Caco-2 (cell line): ENCODE measurements at regions of chr2 and their contacts with region 1.

Region 1: GRCh38 chr2:5915881-5916310 is 223.7 kb downstream of the SOX11 start:
- DNase-seq: peak; percentile 39 to 43
- H3K4me3 ChIP-seq: no peak overlapping the region
- H3K4me3 Mint-ChIP-seq: no peak overlapping the region
- H3K27ac Mint-ChIP-seq: no peak overlapping the region
- H3K4me1 ChIP-seq: no peaks in the 10 kb centered on the region
- H3K4me1 Mint-ChIP-seq: peaks cover 4% of the 10 kb centered on the region
- H3K27me3 ChIP-seq: no peaks in the 10 kb centered on the region
- H3K27me3 Mint-ChIP-seq: no peaks in the 10 kb centered on the region
- CTCF ChIP-seq: no peak

Region 2: DNA sequence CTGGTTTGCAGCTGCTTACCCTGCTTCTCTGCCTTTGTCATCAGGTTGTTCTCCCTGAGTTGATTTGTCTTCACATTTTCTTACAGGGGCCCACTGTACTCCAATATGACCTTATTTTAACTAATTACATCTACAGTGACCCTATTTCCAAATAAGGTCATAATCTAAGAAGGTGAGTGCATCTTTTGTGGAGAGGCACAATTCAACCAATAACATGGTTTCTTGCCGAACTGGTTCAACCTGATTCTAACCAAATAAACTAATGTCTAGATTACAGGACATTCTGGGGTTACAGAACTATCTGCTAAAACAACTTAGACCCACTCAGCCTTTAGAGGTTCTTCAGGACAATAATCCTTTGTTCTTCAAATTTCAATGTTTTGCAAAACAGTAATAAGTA is 720.3 kb before region 1 on chr2:
- CTCF ChIA-PET with region 1: no interaction called
- POLR2A ChIA-PET with region 1: no interaction called
- intact Hi-C with region 1: no loop called
- DNase-seq: no peak
- H3K4me3 ChIP-seq: no peak overlapping the region
- H3K4me3 Mint-ChIP-seq: no peak overlapping the region
- H3K27ac Mint-ChIP-seq: no peak overlapping the region
- H3K4me1 ChIP-seq: no peaks in the 10 kb centered on the region
- H3K4me1 Mint-ChIP-seq: no peaks in the 10 kb centered on the region
- H3K27me3 ChIP-seq: no peaks in the 10 kb centered on the region
- H3K27me3 Mint-ChIP-seq: no peaks in the 10 kb centered on the region
- CTCF ChIP-seq: no peak

Region 3: GRCh38 chr2:5849587-5849986 is 66.3 kb before region 1 on chr2:
- CTCF ChIA-PET with region 1: no interaction called
- POLR2A ChIA-PET with region 1: interaction called, 9 read pairs
- intact Hi-C with region 1: loop called (anchors 2 kb)
- DNase-seq: peak; percentile 37 to 47
- H3K4me3 ChIP-seq: no peak overlapping the region
- H3K4me3 Mint-ChIP-seq: no peak overlapping the region
- H3K27ac Mint-ChIP-seq: peak overlapping the region; percentile 27
- H3K4me1 ChIP-seq: peaks cover 7% of the 10 kb centered on the region; the same call in 1 of the 2 replicates
- H3K4me1 Mint-ChIP-seq: peaks cover 6% of the 10 kb centered on the region
- H3K27me3 ChIP-seq: no peaks in the 10 kb centered on the region
- H3K27me3 Mint-ChIP-seq: no peaks in the 10 kb centered on the region
- CTCF ChIP-seq: no peak